Dorsolateral prefrontal cortex (tissue), 120 donors: ENCODE measurements at regions of chr3 and their contacts with region 1.

Region 1: GRCh38 chr3:128879125-128879969 is at the start of gene ACAD9:
- DNase-seq: peak; percentile 94 to 99 (median 97)
- H3K4me3 ChIP-seq: peak within 1 kb of the TSS; percentile 67 to 99 (median 85)
- H3K27ac ChIP-seq: peak within 1 kb of the TSS; percentile 73 to 97 (median 92)
- H3K27me3 ChIP-seq: no peaks in the 10 kb centered on the region
- CTCF ChIP-seq: peak in 40 of 56 donors; percentile 5 to 64 (median 26)
- total RNA-seq, gene ACAD9: 36.3 to 64.1 (median 51.0) TPM

Region 2: DNA sequence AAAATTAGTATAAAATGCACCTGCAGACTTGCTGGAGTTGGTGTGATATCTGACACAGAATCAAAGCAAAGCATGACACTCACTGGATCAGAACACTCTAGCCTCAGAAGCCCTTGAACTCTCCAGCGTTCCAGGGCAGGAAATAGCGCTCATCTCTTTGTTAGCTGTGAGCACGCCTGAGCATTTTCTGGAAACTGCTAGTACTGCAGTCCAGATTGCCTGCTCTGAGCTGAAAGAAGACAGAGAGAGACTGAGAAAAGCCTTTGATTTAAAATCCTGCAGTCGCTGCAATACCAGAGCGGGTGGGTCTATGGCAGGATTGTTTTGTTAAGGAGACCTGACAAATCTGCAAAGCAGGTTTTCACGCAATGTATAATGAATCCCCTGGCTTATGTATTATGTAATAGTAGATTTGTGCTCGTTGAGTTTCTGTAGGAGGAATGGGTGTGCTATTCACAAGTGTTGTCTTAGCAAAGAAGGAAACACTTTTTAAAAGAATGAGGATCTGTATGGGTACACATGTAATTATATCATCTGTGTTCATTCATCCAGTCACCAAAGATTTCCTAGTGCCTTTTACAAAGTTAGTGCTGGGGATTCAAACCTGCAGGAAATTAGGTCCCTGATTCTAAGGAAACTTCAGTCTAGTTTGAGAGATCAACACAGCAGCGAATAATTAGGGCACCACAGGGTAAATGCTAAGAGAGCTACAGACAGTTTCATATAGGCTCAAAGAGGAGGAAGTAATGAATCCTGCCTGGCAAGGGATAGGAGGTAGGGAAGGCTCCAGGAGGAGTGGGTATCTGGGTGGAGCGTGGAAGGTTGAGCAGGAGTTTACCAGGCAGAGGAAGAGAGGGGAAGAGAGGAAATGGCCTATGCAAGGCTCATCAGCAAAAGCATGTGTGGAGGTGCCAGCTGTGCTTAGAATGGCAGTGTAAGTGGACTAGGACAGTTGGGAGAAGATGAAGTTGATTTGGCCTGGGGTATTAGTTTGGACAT is 1030.9 kb before region 1 on chr3:
- intact Hi-C with region 1: no loop called
- DNase-seq: peak in 7 of 10 donors; percentile 53 to 82 (median 63)
- H3K4me3 ChIP-seq: no peak overlapping the region
- H3K27ac ChIP-seq: peak overlapping the region; percentile 3 to 91 (median 81)
- H3K27me3 ChIP-seq: no peaks in the 10 kb centered on the region
- CTCF ChIP-seq: peak in 10 of 56 donors; percentile 5 to 31 (median 20)

Region 3: DNA sequence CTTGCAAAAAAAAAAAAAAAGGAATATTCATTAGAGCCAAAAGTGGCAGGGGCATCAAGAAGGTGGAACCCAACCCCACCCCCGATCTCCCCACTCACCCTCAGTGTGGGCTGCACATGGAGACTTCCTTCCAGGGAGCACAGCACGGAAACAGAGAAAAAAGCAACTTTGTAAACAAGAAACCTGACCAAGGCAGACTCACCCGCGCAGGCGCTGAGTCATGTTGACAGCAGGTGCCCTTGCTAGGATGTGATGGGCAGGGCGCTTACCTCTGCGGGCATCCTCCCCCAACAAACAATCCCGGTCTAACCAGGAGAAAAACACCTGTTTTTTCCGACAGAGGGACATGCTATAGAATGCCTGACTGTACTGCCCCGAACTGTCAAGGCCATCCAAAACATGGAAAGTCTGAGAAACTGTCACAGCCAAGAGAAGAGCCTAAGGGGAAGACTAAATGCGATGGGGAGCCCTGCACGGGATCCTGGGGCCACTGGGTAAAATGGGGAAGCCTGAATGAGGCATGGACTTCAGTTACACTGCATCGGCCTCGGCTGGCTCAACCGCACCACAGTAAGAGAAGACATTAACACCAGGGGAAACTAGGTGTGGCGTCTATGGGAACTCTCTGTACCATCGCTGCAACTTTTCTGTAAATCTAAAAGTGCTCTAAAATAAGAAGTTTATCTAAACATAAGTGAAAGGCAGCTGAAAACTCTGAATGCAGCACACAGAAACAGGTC is 319.7 kb before region 1 on chr3:
- intact Hi-C with region 1: no loop called
- DNase-seq: no peak
- H3K4me3 ChIP-seq: no peak overlapping the region
- H3K27ac ChIP-seq: no peak overlapping the region
- H3K27me3 ChIP-seq: peaks cover 0 to 46% (median 28%) of the 10 kb centered on the region in 45 donors
- CTCF ChIP-seq: no peak

Region 4: DNA sequence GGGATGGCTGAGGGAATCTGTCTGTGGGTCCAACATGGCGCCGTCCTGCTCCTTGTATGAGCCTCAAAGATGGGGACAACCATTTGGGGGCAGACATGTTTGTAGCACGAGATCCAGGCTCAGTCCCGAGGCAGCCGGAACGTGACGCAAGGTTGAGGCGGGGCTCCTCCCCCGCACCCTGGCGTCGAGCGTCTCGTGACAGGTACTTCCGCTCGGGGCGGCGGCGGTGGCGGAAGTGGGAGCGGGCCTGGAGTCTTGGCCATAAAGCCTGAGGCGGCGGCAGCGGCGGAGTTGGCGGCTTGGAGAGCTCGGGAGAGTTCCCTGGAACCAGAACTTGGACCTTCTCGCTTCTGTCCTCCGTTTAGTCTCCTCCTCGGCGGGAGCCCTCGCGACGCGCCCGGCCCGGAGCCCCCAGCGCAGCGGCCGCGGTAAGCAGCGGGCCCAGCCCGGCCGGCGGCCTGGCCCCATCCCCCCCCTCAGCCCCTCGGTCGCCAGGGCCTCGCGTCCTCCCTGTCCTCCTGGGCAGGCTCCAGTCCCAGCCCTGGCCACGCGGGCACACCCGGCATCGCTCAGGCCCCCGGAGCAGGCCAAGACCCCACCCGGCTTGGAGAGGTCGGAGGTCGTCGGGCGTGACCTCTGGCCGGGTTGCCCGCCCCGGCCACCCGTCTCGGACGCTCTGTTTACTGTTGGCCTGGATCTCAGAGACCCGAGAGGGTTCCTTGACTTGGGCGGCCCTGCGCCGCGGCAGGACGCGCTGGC is 153.2 kb before region 1 on chr3 and contains the start of gene RAB7A:
- intact Hi-C with region 1: loop called in 1 of 2 experiments (anchors 1 kb)
- DNase-seq: peak; percentile 94 to 99 (median 98)
- H3K4me3 ChIP-seq: peak within 1 kb of the TSS; percentile 71 to 100 (median 97)
- H3K27ac ChIP-seq: peak within 1 kb of the TSS; percentile 59 to 97 (median 91)
- H3K27me3 ChIP-seq: no peaks in the 10 kb centered on the region
- CTCF ChIP-seq: peak in 50 of 56 donors; percentile 7 to 69 (median 44)
- total RNA-seq, gene RAB7A: 221 to 378 (median 299) TPM

Region 5: GRCh38 chr3:128794770-128795649 is 84.3 kb before region 1 on chr3:
- intact Hi-C with region 1: loop called (anchors 5 kb)
- DNase-seq: peak in 5 of 10 donors; percentile 38 to 52 (median 51)
- H3K4me3 ChIP-seq: peak overlapping the region in 1 of 59 donors; percentile 22
- H3K27ac ChIP-seq: peak overlapping the region in 56 of 59 donors; percentile 4 to 82 (median 49)
- H3K27me3 ChIP-seq: no peaks in the 10 kb centered on the region
- CTCF ChIP-seq: peak; percentile 57 to 91 (median 81)

Region 6: DNA sequence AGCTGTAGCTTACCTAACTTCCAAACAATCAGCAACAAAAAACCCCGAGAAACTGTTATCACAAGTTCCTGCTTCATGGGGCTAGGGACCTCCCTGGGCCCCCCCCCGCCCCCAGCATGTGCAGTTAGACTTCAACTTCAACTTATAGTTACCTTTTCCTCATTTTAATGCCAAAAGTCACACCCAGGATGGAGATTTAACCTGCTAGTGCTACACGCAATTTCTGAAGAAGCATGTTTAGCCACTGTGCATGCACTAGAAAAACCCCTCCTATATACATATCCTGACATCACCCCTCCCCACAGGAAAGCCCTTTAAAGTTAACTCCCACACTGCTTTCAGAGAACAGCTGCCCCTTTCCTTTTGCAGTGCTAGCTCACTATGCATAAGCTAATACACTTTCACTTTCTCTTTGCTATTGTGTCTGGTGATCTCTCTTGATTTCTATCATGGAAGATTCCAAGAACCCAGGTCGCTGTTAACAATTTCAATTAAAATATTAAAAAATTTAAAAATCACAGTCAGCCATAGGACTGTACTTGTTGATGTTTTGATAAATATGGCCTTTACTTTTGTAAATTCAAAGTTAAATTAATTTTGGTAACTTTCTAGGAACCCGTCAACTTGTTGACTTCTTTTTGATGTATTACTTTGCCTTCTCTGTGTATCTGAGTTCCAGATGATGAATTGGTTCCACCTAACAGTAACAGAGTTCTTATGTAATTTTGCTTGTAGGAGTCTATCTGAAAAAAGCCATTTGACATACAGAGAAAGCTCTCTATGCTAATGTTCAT is 75.1 kb before region 1 on chr3:
- intact Hi-C with region 1: loop called (anchors 5 kb)
- DNase-seq: no peak
- H3K4me3 ChIP-seq: peak overlapping the region in 31 of 59 donors; percentile 1 to 46 (median 21)
- H3K27ac ChIP-seq: peak overlapping the region in 48 of 59 donors; percentile 1 to 80 (median 40)
- H3K27me3 ChIP-seq: no peaks in the 10 kb centered on the region
- CTCF ChIP-seq: no peak

Region 7: GRCh38 chr3:129039271-129040038 is 160.1 kb after region 1 on chr3:
- intact Hi-C with region 1: no loop called
- DNase-seq: peak in 1 of 10 donors; percentile 42
- H3K4me3 ChIP-seq: no peak overlapping the region
- H3K27ac ChIP-seq: no peak overlapping the region
- H3K27me3 ChIP-seq: peaks cover 0 to 29% (median 8%) of the 10 kb centered on the region in 45 donors
- CTCF ChIP-seq: no peak